AG04449 (cell line): ENCODE measurements at regions of chr17 and their contacts with region 1.

Region 1: DNA sequence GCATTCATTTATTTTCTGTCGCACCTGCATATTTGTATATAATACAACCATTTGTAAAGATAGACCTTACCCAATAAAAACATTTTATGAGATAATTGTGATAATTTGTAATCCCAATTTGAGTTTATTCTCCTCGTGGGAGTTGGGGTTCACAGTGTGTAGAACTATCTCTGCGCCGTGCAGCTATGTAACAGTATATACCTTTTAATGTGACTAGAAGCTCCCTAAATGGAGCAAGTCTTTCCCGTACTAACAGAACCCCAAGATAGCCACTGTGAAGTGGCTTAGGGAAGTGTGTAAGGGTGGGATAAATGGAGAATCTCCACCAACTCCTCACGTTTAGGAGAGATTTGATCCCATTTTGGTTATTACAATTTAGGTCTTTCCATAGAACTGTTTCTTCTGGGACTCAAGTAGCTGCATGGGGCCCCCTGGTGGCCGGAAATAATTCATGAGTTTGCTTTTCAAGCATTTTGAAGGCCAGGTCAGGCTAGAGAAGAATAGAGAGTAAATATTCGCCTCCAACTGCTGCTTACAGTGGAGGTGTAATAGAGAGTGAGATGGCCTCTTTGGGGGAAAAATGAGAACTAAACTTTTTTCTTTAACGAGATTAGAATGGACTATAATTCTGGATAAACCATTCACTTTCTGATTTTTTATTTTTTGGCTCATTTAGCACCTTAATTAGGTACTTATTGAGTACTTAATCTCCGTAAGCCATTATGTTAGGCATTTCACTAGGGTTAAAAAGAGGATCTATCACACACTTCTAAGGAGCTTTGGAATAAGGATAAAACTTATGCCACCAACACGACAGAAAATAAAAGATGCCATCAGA is 4.5 kb downstream of the TMEM100 start:
- DNase-seq: no peak
- H3K4me3 ChIP-seq: no peak overlapping the region
- CTCF ChIP-seq: peak; percentile 60

Region 2: GRCh38 chr17:55652114-55652823 is 65.8 kb before region 1 on chr17:
- CTCF ChIA-PET with region 1: no interaction called
- POLR2A ChIA-PET with region 1: no interaction called
- DNase-seq: no peak
- H3K4me3 ChIP-seq: no peak overlapping the region
- CTCF ChIP-seq: no peak

Region 3: DNA sequence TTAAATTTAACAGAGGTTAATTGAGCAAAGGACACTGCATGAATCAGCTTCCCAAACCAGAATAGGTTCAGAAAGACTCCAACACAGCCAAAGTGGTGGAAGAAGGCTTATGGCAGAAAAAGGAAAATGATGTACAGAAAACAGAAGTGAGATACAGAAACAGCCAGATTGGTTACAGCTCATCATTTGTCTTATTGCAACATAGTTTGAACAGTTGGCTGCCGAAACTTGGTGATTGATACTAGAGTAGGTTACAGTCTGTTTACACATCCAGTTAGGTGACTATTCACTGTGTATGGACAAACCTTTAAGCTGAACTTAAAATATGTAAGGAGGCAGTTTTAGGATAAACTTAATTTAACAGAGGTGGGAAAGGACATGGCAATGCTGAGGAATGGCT is 13.7 kb before region 1 on chr17:
- CTCF ChIA-PET with region 1: interaction called, 45 read pairs
- POLR2A ChIA-PET with region 1: no interaction called
- DNase-seq: no peak
- H3K4me3 ChIP-seq: no peak overlapping the region
- CTCF ChIP-seq: no peak

Region 4: GRCh38 chr17:55735731-55736405 is 17.8 kb after region 1 on chr17:
- CTCF ChIA-PET with region 1: interaction called, 184 read pairs
- POLR2A ChIA-PET with region 1: interaction called, 5 read pairs
- DNase-seq: no peak
- H3K4me3 ChIP-seq: no peak overlapping the region
- CTCF ChIP-seq: peak; percentile 54